GM12878 (cell line): ENCODE measurements at regions of chr14 and their contacts with region 1.

Region 1: GRCh38 chr14:95327558-95328374 is 8.1 kb upstream of the CLMN start:
- DNase-seq: peak; percentile 91
- ATAC-seq: peak; percentile 96
- H3K4me3 ChIP-seq: peak overlapping the region; percentile 46; the same call in 1 of the 2 replicates
- H3K27ac ChIP-seq: peak overlapping the region; percentile 77
- H3K4me1 ChIP-seq: peaks cover 22% of the 10 kb centered on the region
- H3K27me3 ChIP-seq: no peaks in the 10 kb centered on the region
- CTCF ChIP-seq: no peak
- EP300 ChIP-seq: peak; percentile 88 to 97
- POLR2A ChIP-seq: 0 out of 2 replicates have a peak, but pooled peaks have one; percentile 50
- RAD21 ChIP-seq: peak; percentile 22; the same call in 1 of the 2 replicates

Region 2: DNA sequence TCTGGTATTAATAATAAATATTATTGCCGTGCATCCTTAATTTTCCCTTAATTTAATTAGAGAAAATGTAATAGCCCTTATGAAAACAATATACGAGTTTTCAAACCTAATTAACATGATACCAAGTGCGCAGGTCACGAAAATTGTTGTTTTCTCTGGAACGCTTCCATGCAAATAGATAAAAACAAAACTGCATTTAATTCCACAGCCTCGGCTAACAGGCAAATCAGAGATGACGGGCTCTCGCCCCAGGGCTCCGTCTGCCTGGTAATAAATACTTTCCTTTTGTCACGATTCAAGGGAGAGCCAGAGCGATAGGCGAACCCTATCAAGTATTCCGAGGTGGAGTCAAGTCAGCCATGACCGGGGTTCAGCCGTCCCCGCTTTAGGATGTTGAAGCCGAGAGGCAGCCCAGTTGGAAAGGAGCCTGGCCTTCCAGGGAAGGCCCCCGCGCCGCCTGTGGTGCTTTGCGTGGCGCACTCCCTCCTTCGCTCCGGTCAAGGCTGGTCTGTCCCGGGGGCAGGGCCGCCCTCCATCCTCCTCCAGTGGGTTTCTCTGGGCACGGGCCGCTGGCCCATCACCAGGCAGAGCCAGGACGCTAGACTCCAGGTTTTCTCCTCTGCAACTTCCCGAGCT is 420.0 kb before region 1 on chr14:
- CTCF ChIA-PET with region 1: no interaction called
- POLR2A ChIA-PET with region 1: no interaction called
- RAD21 ChIA-PET with region 1: no interaction called
- SMC1A ChIA-PET with region 1: no interaction called
- in situ Hi-C with region 1: no loop called
- intact Hi-C with region 1: no loop called
- DNase-seq: no peak
- ATAC-seq: no peak
- H3K4me3 ChIP-seq: no peak overlapping the region
- H3K27ac ChIP-seq: no peak overlapping the region
- H3K4me1 ChIP-seq: no peaks in the 10 kb centered on the region
- H3K27me3 ChIP-seq: no peaks in the 10 kb centered on the region; a peak in 2 of 4 replicates
- CTCF ChIP-seq: no peak
- EP300 ChIP-seq: no peak
- POLR2A ChIP-seq: no peak
- RAD21 ChIP-seq: no peak

Region 3: GRCh38 chr14:95126906-95127530 is 200.7 kb before region 1 on chr14:
- CTCF ChIA-PET with region 1: no interaction called
- POLR2A ChIA-PET with region 1: no interaction called
- RAD21 ChIA-PET with region 1: no interaction called
- SMC1A ChIA-PET with region 1: no interaction called
- in situ Hi-C with region 1: no loop called
- intact Hi-C with region 1: no loop called
- DNase-seq: no peak
- ATAC-seq: no peak
- H3K4me3 ChIP-seq: no peak overlapping the region
- H3K27ac ChIP-seq: peak overlapping the region; percentile 35; the same call in 1 of the 2 replicates
- H3K4me1 ChIP-seq: peaks cover 6% of the 10 kb centered on the region; the same call in 1 of the 2 replicates
- H3K27me3 ChIP-seq: no peaks in the 10 kb centered on the region
- CTCF ChIP-seq: no peak
- EP300 ChIP-seq: no peak
- POLR2A ChIP-seq: no peak
- RAD21 ChIP-seq: no peak

Region 4: DNA sequence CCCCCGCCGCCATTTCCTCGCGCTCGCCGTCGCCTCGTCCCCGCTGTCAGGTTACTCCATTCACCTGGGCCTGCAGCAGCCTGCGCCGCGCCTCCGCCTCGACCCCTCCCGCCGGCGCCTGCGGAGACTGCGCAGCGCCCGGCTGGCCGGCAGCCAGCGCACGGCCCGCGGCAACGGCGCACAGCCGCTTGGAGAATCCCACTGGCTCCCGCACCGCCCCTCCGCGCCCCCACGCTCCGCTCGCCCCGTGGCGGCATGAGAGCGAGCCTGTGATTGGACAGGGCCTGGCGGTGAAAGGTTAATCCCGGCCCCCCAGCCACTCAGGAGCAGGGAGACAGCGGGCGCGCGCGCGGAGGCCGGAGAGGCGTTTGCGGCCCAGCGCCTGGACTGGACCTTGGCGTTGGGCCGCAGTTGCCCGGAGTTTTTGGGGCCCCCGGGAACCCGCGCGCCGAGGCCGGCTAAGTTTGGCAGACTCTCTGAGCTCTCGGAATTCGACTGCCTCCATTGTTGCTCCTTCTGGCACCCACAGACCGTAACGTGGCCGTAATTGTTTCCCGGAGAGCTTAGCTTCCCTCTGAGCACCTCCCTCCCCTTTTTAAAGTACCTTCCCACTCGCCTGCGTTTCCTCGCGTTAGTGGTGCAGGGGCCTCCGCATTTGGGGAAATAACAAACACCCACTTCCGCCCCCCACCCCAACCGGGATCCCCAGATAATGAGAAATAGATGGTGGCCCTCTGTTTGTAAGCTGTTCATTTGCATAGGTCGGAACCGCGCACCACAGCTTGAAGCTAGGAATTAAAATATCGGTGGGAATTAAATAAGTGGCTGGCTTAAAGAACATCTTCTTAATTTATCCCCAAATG is 170.2 kb before region 1 on chr14 and contains the start of gene DICER1:
- CTCF ChIA-PET with region 1: no interaction called
- POLR2A ChIA-PET with region 1: interaction called, 6 read pairs
- RAD21 ChIA-PET with region 1: interaction called, 3 read pairs
- SMC1A ChIA-PET with region 1: interaction called, 4 read pairs
- in situ Hi-C with region 1: no loop called
- intact Hi-C with region 1: loop called (anchors 5 kb)
- DNase-seq: peak; percentile 44
- ATAC-seq: peak; percentile 85
- H3K4me3 ChIP-seq: peak within 1 kb of the TSS; percentile 89
- H3K27ac ChIP-seq: peak within 1 kb of the TSS; percentile 95
- H3K4me1 ChIP-seq: peaks cover 8% of the 10 kb centered on the region; the same call in 1 of the 2 replicates
- H3K27me3 ChIP-seq: no peaks in the 10 kb centered on the region
- CTCF ChIP-seq: no peak
- EP300 ChIP-seq: no peak
- POLR2A ChIP-seq: peak; percentile 60
- RAD21 ChIP-seq: no peak
- polyA plus RNA-seq, gene DICER1: 6.8 to 9.8 TPM

Region 5: GRCh38 chr14:95211721-95212504 is 115.9 kb before region 1 on chr14:
- CTCF ChIA-PET with region 1: interaction called, 8 read pairs
- POLR2A ChIA-PET with region 1: interaction called, 3 read pairs
- RAD21 ChIA-PET with region 1: interaction called, 12 read pairs
- SMC1A ChIA-PET with region 1: interaction called, 6 read pairs
- in situ Hi-C with region 1: no loop called
- intact Hi-C with region 1: loop called (anchors 5 kb)
- DNase-seq: peak; percentile 27
- ATAC-seq: peak; percentile 80
- H3K4me3 ChIP-seq: no peak overlapping the region
- H3K27ac ChIP-seq: no peak overlapping the region
- H3K4me1 ChIP-seq: peaks cover 30% of the 10 kb centered on the region
- H3K27me3 ChIP-seq: no peaks in the 10 kb centered on the region
- CTCF ChIP-seq: no peak
- EP300 ChIP-seq: peak; percentile 53 to 67; a peak in 3 of 4 replicates
- POLR2A ChIP-seq: no peak
- RAD21 ChIP-seq: no peak

Region 6: GRCh38 chr14:95652690-95653089 is 324.9 kb after region 1 on chr14:
- CTCF ChIA-PET with region 1: no interaction called
- POLR2A ChIA-PET with region 1: no interaction called
- RAD21 ChIA-PET with region 1: no interaction called
- SMC1A ChIA-PET with region 1: no interaction called
- in situ Hi-C with region 1: no loop called
- intact Hi-C with region 1: no loop called
- DNase-seq: no peak
- ATAC-seq: peak; percentile 76
- H3K4me3 ChIP-seq: no peak overlapping the region
- H3K27ac ChIP-seq: peak overlapping the region; percentile 67
- H3K4me1 ChIP-seq: peaks cover 17% of the 10 kb centered on the region
- H3K27me3 ChIP-seq: no peaks in the 10 kb centered on the region
- CTCF ChIP-seq: no peak
- EP300 ChIP-seq: no peak
- POLR2A ChIP-seq: no peak
- RAD21 ChIP-seq: no peak

Region 7: GRCh38 chr14:96304956-96305355 is 977.2 kb after region 1 on chr14:
- CTCF ChIA-PET with region 1: no interaction called
- POLR2A ChIA-PET with region 1: no interaction called
- RAD21 ChIA-PET with region 1: no interaction called
- SMC1A ChIA-PET with region 1: no interaction called
- in situ Hi-C with region 1: no loop called
- intact Hi-C with region 1: no loop called
- DNase-seq: no peak
- ATAC-seq: no peak
- H3K4me3 ChIP-seq: no peak overlapping the region
- H3K27ac ChIP-seq: no peak overlapping the region
- H3K4me1 ChIP-seq: no peaks in the 10 kb centered on the region
- H3K27me3 ChIP-seq: no peaks in the 10 kb centered on the region
- CTCF ChIP-seq: 0 out of 6 replicates have a peak, but pooled peaks of 1 of the 3 experiments have one; percentile 6
- EP300 ChIP-seq: no peak
- POLR2A ChIP-seq: no peak
- RAD21 ChIP-seq: no peak